ENCODE measurements at regions of chr17 and their contacts with region 1.

Region 1: DNA sequence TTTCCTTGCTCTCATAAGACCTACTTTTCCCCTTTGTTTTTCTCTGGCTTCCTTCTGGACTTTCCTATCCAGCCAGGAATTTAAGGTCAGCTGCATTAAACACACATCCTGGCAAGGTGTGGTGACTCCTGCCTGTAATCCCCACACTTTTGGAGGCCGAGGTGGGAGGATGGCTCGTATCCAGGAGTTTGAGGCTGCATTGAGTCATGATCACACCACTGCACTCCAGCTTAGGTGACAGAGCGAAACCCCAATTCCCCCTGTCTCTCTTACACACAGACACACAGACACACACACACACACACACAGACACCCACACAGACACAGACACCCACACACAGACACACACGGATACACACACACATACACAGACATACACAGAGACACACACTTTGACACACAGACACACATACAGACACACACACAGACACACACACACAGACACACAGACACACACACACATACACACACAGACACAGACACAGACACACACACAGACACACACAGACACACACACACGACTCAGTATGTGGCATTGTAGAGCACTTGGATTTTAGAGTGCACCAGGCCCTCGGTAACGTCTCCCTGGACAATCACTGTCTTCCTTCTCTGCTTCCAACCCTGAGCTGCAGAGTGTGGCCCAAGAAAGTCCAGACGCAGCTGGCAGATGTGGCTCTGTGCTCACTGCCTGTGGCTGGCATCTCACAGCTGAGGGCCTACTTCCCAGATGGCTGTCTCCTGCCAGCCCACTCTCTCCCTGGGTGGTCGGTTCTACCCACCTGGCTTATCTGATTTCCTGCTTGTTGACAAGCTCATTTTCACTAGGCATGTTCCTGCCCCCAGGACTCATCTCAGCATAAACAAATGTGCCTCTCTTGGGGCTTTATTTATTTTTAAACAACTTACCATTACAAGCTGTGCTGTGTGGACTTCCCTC is 39.0 kb downstream of the NLRP1 start:
- DNase-seq: peak; percentile 26
- ATAC-seq: no peak
- H3K4me3 ChIP-seq: no peak overlapping the region
- H3K27ac ChIP-seq: no peak overlapping the region
- H3K4me1 ChIP-seq: no peaks in the 10 kb centered on the region
- H3K27me3 ChIP-seq: no peaks in the 10 kb centered on the region
- CTCF ChIP-seq: no peak

Region 2: DNA sequence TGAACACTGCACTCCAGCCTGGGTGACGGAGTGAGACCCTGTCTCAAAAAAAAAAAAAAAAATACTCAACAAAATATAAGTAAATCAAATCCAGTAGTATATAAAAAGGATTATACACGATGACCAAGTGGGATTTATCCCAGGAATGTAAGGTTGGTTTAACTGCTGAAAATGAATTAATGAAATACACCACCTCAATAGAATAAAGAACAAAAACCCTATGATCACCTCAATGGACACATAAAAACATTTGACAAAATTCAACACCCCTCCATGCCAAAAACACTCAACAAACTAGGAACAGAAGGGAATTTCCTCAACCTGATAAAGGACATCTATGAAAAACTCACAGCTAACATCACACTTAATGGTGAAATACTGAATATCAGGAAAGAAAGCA is 52.3 kb before region 1 on chr17:
- CTCF ChIA-PET with region 1: no interaction called
- POLR2A ChIA-PET with region 1: interaction called, 10 read pairs
- intact Hi-C with region 1: no loop called
- DNase-seq: no peak
- ATAC-seq: no peak
- H3K4me3 ChIP-seq: no peak overlapping the region
- H3K27ac ChIP-seq: no peak overlapping the region
- H3K4me1 ChIP-seq: no peaks in the 10 kb centered on the region; the same call in 1 of the 2 replicates
- H3K27me3 ChIP-seq: no peaks in the 10 kb centered on the region
- CTCF ChIP-seq: no peak